ENCODE measurements at regions of chr4 and their contacts with region 1.

Region 1: DNA sequence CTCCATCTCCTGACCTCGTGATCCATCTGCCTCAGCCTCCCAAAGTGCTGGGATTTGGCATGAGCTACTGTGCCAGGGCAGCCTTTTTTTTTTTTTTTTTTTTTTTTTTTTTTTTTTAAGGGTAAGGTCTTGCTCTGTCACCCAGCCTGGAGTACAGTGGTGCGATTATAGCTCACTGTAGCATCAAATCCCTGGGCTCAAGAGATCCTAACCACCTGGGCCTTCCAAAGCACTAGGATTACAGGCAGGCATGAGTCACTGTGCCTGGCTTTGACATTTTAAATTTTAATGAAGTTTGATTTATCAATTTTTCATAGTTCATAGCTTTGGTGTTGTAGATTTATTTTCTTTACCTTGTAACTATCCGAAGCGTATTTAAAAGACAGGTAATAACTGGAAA is 17.8 kb upstream of the OCIAD2 start:
- DNase-seq: no peak
- ATAC-seq: no peak
- H3K4me3 ChIP-seq: no peak overlapping the region
- H3K4me3 Mint-ChIP-seq: peak overlapping the region in 1 of 3 donors; percentile 32
- H3K27ac ChIP-seq: no peak overlapping the region
- H3K27ac Mint-ChIP-seq: no peak overlapping the region
- H3K4me1 ChIP-seq: peaks cover 0 to 8% of the 10 kb centered on the region in 2 experiments
- H3K4me1 Mint-ChIP-seq: peaks cover 7 to 16% (median 10%) of the 10 kb centered on the region in 3 donors
- H3K27me3 ChIP-seq: peaks cover 0 to 3% of the 10 kb centered on the region in 2 experiments
- H3K27me3 Mint-ChIP-seq: no peaks in the 10 kb centered on the region

Region 2: DNA sequence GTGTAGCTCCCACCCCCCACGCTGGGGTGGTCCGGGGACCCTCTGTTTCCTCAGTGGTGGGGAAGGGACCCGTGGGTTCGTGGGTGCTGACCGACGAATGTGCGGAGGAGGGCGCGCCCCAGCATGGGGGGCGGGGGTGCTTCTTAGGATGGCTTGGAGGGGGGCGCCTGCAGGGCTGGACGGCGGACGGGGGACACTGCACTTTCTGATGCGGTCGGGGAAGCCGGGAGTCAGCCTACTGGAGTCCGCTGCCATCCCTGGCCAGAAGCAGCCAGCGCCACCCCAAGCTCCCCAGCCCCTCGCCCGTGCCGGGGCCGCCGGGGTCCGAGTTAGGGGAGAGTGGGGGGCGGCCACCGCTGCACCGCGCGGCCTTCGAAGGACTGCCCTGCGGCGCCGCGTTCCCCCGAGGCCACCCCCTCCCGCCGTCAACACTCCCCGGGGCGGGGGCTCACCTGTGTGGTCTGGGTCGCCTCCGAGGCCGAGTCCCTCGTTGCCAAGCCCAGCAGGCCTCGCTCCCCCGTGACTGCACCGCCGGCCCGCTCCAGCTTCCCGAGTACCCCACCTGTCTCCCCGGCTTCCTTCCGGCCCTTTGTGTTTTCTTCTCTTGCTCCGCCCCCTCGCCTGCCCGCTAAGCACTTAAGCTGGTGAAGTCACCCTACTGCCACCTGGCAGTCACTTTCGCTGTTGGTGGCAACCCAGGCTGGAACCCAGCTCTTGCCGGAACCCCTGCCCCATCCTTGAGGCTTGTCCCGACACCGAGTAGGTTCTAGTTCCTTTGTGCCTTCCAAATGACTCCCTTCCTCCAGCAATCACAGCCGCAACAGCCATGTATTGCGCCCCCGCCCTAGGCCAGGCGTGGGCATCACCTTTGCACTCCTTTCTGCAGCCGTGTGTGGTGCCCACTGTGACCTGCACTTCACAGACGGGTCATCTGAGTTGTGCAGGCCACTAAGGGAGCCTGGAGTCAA is 17.9 kb before region 1 on chr4 and contains the start of gene OCIAD2:
- CTCF ChIA-PET with region 1: no interaction called
- POLR2A ChIA-PET with region 1: interaction called in 1 of 2 experiments, 10 read pairs
- DNase-seq: peak; percentile 71 to 90 (median 83)
- ATAC-seq: peak; percentile 95 to 99 (median 98)
- H3K4me3 ChIP-seq: peak within 1 kb of the TSS; percentile 64 to 86
- H3K4me3 Mint-ChIP-seq: peak within 1 kb of the TSS; percentile 91 to 96 (median 94)
- H3K27ac ChIP-seq: peak within 1 kb of the TSS; percentile 69
- H3K27ac Mint-ChIP-seq: peak within 1 kb of the TSS; percentile 89 to 95
- H3K4me1 ChIP-seq: peaks cover 19 to 34% of the 10 kb centered on the region in 2 experiments
- H3K4me1 Mint-ChIP-seq: peaks cover 50 to 52% (median 50%) of the 10 kb centered on the region in 3 donors
- H3K27me3 ChIP-seq: no peaks in the 10 kb centered on the region
- H3K27me3 Mint-ChIP-seq: no peaks in the 10 kb centered on the region
- total RNA-seq, gene OCIAD2: 54.0 to 150 (median 113) TPM